ENCODE measurements at regions of chr2 and their contacts with region 1.

Region 1: GRCh38 chr2:85266146-85267041 is 61.4 kb downstream of the TGOLN2 start:
- DNase-seq: peak; percentile 92

Region 2: DNA sequence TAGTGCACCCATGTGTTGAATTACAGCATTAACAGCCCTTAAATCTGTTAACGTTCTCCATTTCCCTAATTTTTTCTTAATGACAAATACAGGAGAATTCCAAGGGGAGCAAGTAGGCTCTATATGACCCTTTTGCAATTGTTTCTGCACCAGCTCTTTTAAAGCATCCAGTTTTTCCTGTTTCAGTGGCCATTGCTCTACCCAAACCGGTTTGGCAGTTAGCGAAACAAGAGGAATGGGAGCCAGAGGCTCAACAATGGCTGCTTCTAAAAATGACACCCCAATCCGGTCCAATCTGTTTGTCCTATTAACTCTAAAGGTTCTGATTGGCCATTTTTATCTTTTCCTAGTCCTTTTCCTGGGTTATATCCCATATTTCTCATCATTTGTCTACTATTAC is 792.2 kb before region 1 on chr2:
- intact Hi-C with region 1: no loop called
- DNase-seq: no peak

Region 3: GRCh38 chr2:84723831-84724230 is 542.6 kb before region 1 on chr2:
- intact Hi-C with region 1: no loop called
- DNase-seq: no peak

Region 4: DNA sequence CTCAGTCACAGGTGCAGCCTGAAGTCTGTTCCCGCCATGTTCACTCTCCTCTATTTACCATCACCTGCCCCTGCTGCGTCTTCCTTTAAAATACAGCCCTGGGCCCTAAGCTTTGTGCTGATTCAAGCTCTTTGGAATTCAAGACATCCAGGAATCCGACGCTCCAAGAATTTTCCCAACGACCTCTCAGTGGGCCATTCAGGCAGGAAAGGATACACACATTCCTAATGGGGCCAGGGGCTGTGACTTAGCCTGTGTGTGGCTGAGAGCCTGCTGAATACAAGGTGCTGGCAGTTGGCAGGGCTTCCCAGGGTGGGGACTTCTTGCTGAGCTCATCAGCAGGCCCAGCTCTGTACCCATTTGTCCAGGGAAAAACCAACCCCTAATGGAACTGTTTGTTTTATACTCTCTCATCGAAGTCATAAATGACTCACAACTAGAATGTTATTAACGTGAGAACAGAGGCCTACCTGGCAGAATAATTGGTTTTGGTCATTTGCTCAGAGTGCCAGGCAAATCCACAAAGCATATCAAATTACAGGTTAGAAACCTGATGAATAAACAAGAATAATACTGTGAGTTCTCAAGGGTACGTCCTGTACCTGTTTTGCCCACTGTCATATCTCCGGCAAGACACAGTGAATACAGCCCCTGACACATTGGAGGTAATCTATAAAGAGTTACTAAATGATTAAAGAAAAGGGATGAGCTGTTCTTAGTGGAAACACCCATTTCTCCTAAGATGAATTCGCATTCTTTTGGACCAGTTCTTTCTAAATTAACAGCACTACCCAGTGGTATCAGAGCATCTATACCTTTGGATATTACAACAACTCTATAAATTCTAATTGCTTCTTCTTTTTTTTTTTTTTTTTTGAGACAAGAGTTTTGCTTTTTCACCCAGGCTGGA is 308.0 kb before region 1 on chr2:
- intact Hi-C with region 1: loop called in 1 of 2 experiments (anchors 5 kb)
- DNase-seq: no peak

Region 5: GRCh38 chr2:85611705-85612587 is 345.6 kb after region 1 on chr2 and contains the start of gene C2orf68:
- intact Hi-C with region 1: no loop called
- DNase-seq: peak; percentile 97
- total RNA-seq, gene C2orf68: 15.8 to 18.4 TPM

Measured in posterior vena cava (tissue), 2 donors.